Naive thymus-derived CD4-positive, alpha-beta T cell (primary cell): ENCODE measurements at regions of chr1 and their contacts with region 1.

Region 1: DNA sequence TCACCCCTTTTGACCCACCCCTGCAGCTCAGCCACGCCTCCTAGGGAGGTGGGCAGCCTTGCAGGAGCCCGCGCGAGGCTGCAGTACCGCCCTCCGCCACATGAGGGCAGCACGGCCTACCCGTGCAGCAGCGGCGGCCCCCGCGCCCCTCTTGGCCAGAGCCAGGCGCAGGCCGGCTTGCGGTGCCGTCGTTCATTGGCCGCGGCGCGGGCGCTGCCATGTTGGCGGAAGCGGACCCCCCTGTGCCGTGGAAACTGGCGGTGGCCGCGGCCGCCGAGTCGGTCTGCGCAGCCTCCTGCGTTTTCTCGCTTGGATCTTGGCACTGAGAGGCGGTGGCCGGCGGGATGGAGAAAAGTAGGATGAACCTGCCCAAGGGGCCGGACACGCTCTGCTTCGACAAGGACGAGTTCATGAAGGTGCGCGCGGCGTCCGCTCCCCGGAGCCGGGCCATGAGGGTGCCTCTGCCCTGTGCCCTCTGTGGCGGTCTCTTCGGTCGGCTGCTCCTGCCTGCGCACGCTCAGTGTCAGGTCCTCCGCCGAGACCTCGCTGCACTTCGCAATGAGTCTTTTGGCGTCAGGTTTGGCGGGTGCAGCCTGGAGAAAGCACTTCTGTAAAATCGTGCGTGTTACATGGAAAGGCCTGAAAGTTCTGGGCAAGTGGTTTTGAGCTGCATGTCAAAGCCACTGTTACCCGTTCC is at the start of gene COG2:
- DNase-seq: peak; percentile 84 to 100 (median 91)
- ATAC-seq: peak; percentile 99
- H3K4me3 ChIP-seq: peak within 1 kb of the TSS; percentile 56
- H3K4me3 Mint-ChIP-seq: peak within 1 kb of the TSS; percentile 90 to 100 (median 96)
- H3K27ac ChIP-seq: peak within 1 kb of the TSS; percentile 76
- H3K27ac Mint-ChIP-seq: peak within 1 kb of the TSS; percentile 81 to 98 (median 93)
- H3K4me1 ChIP-seq: peaks cover 20 to 24% of the 10 kb centered on the region in 2 donors
- H3K4me1 Mint-ChIP-seq: peaks cover 36 to 56% (median 48%) of the 10 kb centered on the region in 7 donors
- H3K27me3 ChIP-seq: peaks cover 0 to 7% of the 10 kb centered on the region in 2 donors
- H3K27me3 Mint-ChIP-seq: peaks cover 0 to 24% (median 12%) of the 10 kb centered on the region in 5 donors
- total RNA-seq, gene COG2: 21.6 to 47.5 (median 34.7) TPM

Region 2: DNA sequence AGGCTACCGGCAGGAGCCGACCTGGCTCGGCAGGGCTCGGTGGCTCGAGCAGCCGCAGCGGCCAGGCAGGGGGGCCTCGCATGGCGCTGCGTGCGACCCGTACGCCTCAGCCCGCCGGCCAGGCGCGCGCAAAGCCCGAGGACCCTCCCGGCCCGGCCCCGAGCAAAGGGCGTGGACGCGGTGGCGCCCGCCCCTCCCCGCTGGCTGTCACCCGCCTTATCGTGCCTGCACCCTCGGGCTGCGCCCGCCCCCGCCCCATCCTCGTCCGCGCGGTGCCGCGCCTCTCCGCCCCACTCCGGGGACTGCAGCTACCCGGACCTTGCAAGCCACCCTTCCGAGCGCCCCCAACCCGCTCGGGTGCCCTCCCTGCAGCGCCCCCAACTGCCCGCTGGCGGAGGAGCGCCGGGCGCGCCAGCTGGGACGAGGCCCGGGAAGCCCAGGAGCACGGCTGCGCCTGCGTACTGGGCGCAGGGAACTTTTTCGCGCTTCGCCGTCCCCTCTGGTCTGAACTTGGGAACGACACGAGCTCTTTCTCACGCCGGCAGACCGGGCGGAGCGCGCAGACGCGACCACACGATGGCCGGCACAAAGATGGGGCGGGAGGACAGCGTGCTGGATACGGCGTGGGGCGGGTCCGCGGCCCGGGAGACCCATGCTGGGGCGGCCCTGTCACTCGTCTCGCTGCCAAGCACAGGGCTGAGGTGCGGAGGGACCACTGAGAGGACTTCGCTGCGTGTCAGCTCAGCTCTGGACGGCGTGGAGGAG is 1083.7 kb before region 1 on chr1 and contains the start of gene ABCB10:
- CTCF ChIA-PET with region 1: no interaction called
- POLR2A ChIA-PET with region 1: no interaction called
- intact Hi-C with region 1: loop called in 1 of 2 experiments (anchors 2 kb)
- DNase-seq: peak; percentile 68 to 96 (median 80)
- ATAC-seq: peak; percentile 85
- H3K4me3 ChIP-seq: peak within 1 kb of the TSS; percentile 88
- H3K4me3 Mint-ChIP-seq: peak within 1 kb of the TSS; percentile 91 to 97 (median 95)
- H3K27ac ChIP-seq: peak within 1 kb of the TSS; percentile 65
- H3K27ac Mint-ChIP-seq: peak within 1 kb of the TSS; percentile 64 to 92 (median 87)
- H3K4me1 ChIP-seq: peaks cover 15 to 16% of the 10 kb centered on the region in 2 donors
- H3K4me1 Mint-ChIP-seq: peaks cover 37 to 46% (median 41%) of the 10 kb centered on the region in 7 donors
- H3K27me3 ChIP-seq: no peaks in the 10 kb centered on the region
- H3K27me3 Mint-ChIP-seq: peaks cover 0 to 6% (median 0%) of the 10 kb centered on the region in 5 donors
- total RNA-seq, gene ABCB10: 14.1 to 31.9 (median 18.4) TPM

Region 3: DNA sequence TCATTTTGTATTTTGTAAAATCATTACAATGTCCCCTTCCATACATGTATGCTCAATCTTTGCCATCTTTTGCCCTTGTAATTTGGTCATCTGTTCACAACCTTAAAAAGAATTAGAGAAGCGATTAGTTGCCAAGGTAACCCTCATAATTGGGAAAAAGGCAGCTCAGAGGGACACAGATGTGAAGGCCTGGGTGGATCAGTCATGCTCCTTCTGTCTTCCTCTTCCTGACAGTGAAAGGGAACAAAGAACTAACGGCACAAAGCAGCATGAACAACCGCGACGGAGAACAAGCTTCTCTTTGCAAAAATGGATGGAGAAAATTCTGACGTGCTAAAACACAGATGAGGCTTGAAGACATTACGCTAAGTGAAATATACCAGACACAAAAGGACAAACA is 78.8 kb before region 1 on chr1:
- CTCF ChIA-PET with region 1: no interaction called
- POLR2A ChIA-PET with region 1: no interaction called
- intact Hi-C with region 1: no loop called
- DNase-seq: no peak
- ATAC-seq: no peak
- H3K4me3 ChIP-seq: no peak overlapping the region
- H3K4me3 Mint-ChIP-seq: no peak overlapping the region
- H3K27ac ChIP-seq: no peak overlapping the region
- H3K27ac Mint-ChIP-seq: no peak overlapping the region
- H3K4me1 ChIP-seq: no peaks in the 10 kb centered on the region
- H3K4me1 Mint-ChIP-seq: peaks cover 0 to 4% (median 0%) of the 10 kb centered on the region in 7 donors
- H3K27me3 ChIP-seq: no peaks in the 10 kb centered on the region
- H3K27me3 Mint-ChIP-seq: peaks cover 26 to 43% (median 29%) of the 10 kb centered on the region in 5 donors

Region 4: GRCh38 chr1:230674581-230674980 is 32.2 kb after region 1 on chr1:
- CTCF ChIA-PET with region 1: no interaction called
- POLR2A ChIA-PET with region 1: no interaction called
- intact Hi-C with region 1: no loop called
- DNase-seq: no peak
- ATAC-seq: no peak
- H3K4me3 ChIP-seq: no peak overlapping the region
- H3K4me3 Mint-ChIP-seq: no peak overlapping the region
- H3K27ac ChIP-seq: no peak overlapping the region
- H3K27ac Mint-ChIP-seq: peak overlapping the region in 1 of 9 donors; percentile 59
- H3K4me1 ChIP-seq: no peaks in the 10 kb centered on the region
- H3K4me1 Mint-ChIP-seq: peaks cover 0 to 4% (median 0%) of the 10 kb centered on the region in 7 donors
- H3K27me3 ChIP-seq: no peaks in the 10 kb centered on the region
- H3K27me3 Mint-ChIP-seq: no peaks in the 10 kb centered on the region

Region 5: GRCh38 chr1:230753586-230754251 is 111.3 kb after region 1 on chr1:
- CTCF ChIA-PET with region 1: no interaction called
- POLR2A ChIA-PET with region 1: no interaction called
- intact Hi-C with region 1: loop called in 1 of 2 experiments (anchors 5 kb)
- DNase-seq: peak in 6 of 9 donors; percentile 3 to 65 (median 42)
- ATAC-seq: peak; percentile 26
- H3K4me3 ChIP-seq: no peak overlapping the region
- H3K4me3 Mint-ChIP-seq: peak overlapping the region in 8 of 10 donors; percentile 9 to 89 (median 75)
- H3K27ac ChIP-seq: no peak overlapping the region
- H3K27ac Mint-ChIP-seq: peak overlapping the region in 3 of 9 donors; percentile 64 to 75 (median 73)
- H3K4me1 ChIP-seq: no peaks in the 10 kb centered on the region
- H3K4me1 Mint-ChIP-seq: peaks cover 0 to 17% (median 4%) of the 10 kb centered on the region in 7 donors
- H3K27me3 ChIP-seq: no peaks in the 10 kb centered on the region
- H3K27me3 Mint-ChIP-seq: peaks cover 7 to 18% (median 12%) of the 10 kb centered on the region in 5 donors

Region 6: DNA sequence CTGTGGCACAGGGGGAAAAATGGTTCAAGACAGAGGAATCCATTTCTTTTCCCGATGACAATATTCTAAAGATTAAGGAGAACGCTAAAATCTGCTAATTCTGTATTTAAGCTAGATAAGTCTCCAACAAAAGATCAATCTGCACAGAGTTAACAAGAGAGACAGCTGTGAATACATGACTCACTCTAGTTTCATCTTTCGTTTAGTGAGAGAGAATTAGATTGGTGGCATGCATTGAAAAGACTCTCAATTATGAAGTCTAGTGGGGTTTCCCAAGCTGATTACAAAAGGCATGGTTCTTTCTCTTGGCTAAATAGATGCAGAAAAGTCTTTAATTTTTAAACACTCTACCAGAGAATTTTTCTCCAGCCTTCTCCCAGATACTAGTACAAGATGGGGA is 139.2 kb after region 1 on chr1:
- CTCF ChIA-PET with region 1: no interaction called
- POLR2A ChIA-PET with region 1: no interaction called
- intact Hi-C with region 1: no loop called
- DNase-seq: no peak
- ATAC-seq: no peak
- H3K4me3 ChIP-seq: no peak overlapping the region
- H3K4me3 Mint-ChIP-seq: no peak overlapping the region
- H3K27ac ChIP-seq: no peak overlapping the region
- H3K27ac Mint-ChIP-seq: no peak overlapping the region
- H3K4me1 ChIP-seq: no peaks in the 10 kb centered on the region
- H3K4me1 Mint-ChIP-seq: no peaks in the 10 kb centered on the region
- H3K27me3 ChIP-seq: no peaks in the 10 kb centered on the region
- H3K27me3 Mint-ChIP-seq: peaks cover 0 to 11% (median 8%) of the 10 kb centered on the region in 5 donors

Region 7: DNA sequence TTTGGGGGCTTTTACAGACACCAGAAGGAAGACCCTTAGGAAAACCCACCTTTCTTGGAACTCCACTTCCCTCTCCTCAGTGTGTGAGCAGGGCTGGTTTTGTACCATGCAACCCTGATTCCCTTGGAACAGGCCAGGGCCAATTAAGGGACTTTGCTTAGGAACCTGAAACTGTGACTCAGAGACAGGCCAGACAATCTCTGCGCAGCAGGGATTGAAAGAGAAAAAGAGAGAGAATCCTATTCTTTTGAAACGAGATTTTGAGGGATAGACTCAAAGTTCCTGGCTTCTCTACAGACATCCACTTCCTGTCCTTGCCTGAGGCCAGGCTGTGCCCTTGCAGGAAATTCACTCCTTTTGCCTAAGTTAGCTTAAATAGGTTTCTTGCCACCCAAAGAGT is 249.0 kb after region 1 on chr1:
- CTCF ChIA-PET with region 1: no interaction called
- POLR2A ChIA-PET with region 1: no interaction called
- intact Hi-C with region 1: no loop called
- DNase-seq: no peak
- ATAC-seq: no peak
- H3K4me3 ChIP-seq: no peak overlapping the region
- H3K4me3 Mint-ChIP-seq: no peak overlapping the region
- H3K27ac ChIP-seq: no peak overlapping the region
- H3K27ac Mint-ChIP-seq: no peak overlapping the region
- H3K4me1 ChIP-seq: no peaks in the 10 kb centered on the region
- H3K4me1 Mint-ChIP-seq: no peaks in the 10 kb centered on the region
- H3K27me3 ChIP-seq: no peaks in the 10 kb centered on the region
- H3K27me3 Mint-ChIP-seq: peaks cover 7 to 14% (median 8%) of the 10 kb centered on the region in 5 donors

Region 8: DNA sequence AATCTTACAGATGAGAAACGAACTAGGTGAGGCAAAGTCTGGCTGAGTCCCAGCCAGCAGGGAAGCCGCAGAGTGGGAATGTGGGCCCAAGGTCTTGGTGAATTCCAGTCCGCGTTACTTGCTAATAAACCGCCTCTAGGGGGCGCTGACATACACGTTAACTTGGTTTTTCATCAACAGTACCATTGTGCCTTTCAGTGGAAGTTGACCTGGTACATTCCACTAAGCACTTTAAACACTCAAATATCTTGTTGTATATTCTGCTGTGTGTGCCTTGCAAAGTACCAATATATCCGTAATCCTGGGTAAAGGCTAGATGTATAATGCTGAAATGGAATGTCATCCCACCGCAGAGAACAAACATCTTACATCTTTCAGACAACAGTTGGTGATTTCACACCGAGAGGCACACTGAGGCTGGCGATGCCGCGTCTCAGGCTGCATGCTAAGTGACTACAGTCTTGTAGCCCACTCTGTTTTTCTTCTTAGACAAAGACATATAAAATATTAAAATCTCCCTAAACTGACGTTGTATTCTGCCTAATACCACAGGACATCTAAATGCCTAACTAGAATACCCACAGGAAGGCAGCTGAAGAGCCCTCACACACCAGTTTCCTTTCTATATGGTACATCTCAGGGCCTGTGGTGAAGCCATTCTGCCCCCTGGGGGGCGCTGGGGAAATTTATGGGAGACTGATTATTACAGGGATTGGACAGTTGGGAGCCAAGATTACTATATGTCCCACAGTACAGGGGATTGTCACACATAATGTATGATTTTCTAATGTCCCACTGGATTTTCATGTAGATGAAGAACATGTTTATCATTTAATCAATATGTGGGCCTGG is 275.1 kb after region 1 on chr1:
- CTCF ChIA-PET with region 1: no interaction called
- POLR2A ChIA-PET with region 1: no interaction called
- intact Hi-C with region 1: loop called in 1 of 2 experiments (anchors 10 kb)
- DNase-seq: peak; percentile 33 to 74 (median 67)
- ATAC-seq: peak; percentile 81
- H3K4me3 ChIP-seq: no peak overlapping the region
- H3K4me3 Mint-ChIP-seq: no peak overlapping the region
- H3K27ac ChIP-seq: no peak overlapping the region
- H3K27ac Mint-ChIP-seq: peak overlapping the region in 5 of 9 donors; percentile 17 to 32 (median 24)
- H3K4me1 ChIP-seq: no peaks in the 10 kb centered on the region
- H3K4me1 Mint-ChIP-seq: peaks cover 0 to 11% (median 0%) of the 10 kb centered on the region in 7 donors
- H3K27me3 ChIP-seq: no peaks in the 10 kb centered on the region
- H3K27me3 Mint-ChIP-seq: no peaks in the 10 kb centered on the region

Region 9: GRCh38 chr1:231211005-231211857 is 568.8 kb after region 1 on chr1:
- CTCF ChIA-PET with region 1: no interaction called
- POLR2A ChIA-PET with region 1: no interaction called
- intact Hi-C with region 1: loop called (anchors 1 kb)
- DNase-seq: peak; percentile 78 to 91 (median 86)
- ATAC-seq: peak; percentile 94
- H3K4me3 ChIP-seq: peak overlapping the region; percentile 56
- H3K4me3 Mint-ChIP-seq: peak overlapping the region; percentile 29 to 95 (median 90)
- H3K27ac ChIP-seq: peak overlapping the region; percentile 14
- H3K27ac Mint-ChIP-seq: peak overlapping the region; percentile 22 to 90 (median 80)
- H3K4me1 ChIP-seq: peaks cover 4% of the 10 kb centered on the region in 2 donors
- H3K4me1 Mint-ChIP-seq: peaks cover 0 to 12% (median 9%) of the 10 kb centered on the region in 7 donors
- H3K27me3 ChIP-seq: no peaks in the 10 kb centered on the region
- H3K27me3 Mint-ChIP-seq: peaks cover 0 to 5% (median 0%) of the 10 kb centered on the region in 5 donors

Region 10: DNA sequence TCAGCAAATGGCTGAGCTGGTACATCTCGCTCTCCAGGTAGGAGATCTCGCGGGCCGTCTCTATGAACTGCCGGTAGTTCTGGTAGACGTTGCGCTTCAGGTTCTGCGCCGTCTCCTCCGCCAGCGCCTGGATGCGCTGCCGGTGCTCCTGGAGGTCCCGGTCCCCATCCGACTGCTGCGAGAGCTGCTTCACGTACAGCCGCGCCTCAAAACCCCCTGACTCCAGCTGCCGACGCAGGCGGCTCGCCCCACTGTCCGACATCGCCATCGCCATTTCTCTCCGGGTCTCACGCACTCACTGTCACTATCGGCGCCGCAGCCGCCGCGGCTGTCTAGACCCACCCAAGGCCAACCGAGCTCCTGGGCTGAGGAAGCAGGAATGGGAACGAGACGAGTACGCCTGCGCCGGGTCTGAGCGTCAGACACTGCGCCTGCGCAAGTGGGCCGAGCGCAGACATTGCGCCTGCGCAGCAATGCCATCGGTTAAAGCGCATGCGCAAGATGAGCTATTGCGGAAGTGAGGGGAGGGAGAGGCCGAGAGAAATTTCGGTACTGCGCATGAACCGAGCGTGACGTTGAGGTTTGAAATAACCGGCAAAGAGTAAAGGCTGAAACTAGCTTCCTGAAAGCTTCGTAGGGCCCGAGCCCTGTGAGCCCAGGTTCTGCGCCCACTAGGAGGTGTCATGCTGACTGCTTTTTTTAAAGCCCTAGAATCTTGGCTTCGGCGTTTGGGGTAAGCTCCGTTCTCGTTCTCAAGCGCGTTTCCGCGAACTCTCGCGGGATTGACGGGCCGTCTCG is 695.3 kb after region 1 on chr1 and contains the start of gene EXOC8:
- CTCF ChIA-PET with region 1: no interaction called
- POLR2A ChIA-PET with region 1: no interaction called
- intact Hi-C with region 1: loop called (anchors 1 kb)
- DNase-seq: peak; percentile 95 to 100 (median 98)
- ATAC-seq: peak; percentile 86
- H3K4me3 ChIP-seq: peak within 1 kb of the TSS; percentile 99
- H3K4me3 Mint-ChIP-seq: peak within 1 kb of the TSS; percentile 97 to 100 (median 99)
- H3K27ac ChIP-seq: peak within 1 kb of the TSS; percentile 94
- H3K27ac Mint-ChIP-seq: peak within 1 kb of the TSS; percentile 96 to 100 (median 100)
- H3K4me1 ChIP-seq: peaks cover 41 to 51% of the 10 kb centered on the region in 2 donors
- H3K4me1 Mint-ChIP-seq: peaks cover 36 to 83% (median 67%) of the 10 kb centered on the region in 7 donors
- H3K27me3 ChIP-seq: no peaks in the 10 kb centered on the region
- H3K27me3 Mint-ChIP-seq: peaks cover 0 to 6% (median 0%) of the 10 kb centered on the region in 5 donors
- total RNA-seq, gene EXOC8: 21.9 to 33.8 (median 28.0) TPM